Activated CD4-positive, alpha-beta memory T cell treated with anti-CD3 and anti-CD28 coated beads for 36 hours (primary cell): ENCODE measurements at regions of chr1 and their contacts with region 1.

Region 1: GRCh38 chr1:23344111-23344986 is at the start of gene HNRNPR:
- DNase-seq: peak; percentile 100
- H3K4me3 Mint-ChIP-seq: peak within 1 kb of the TSS; percentile 91
- H3K27ac Mint-ChIP-seq: peak within 1 kb of the TSS; percentile 96
- H3K4me1 Mint-ChIP-seq: peaks cover 41% of the 10 kb centered on the region
- H3K27me3 Mint-ChIP-seq: no peaks in the 10 kb centered on the region
- total RNA-seq, gene HNRNPR: 180 to 183 TPM

Region 2: GRCh38 chr1:22689505-22689904 is 654.8 kb before region 1 on chr1:
- CTCF ChIA-PET with region 1: no interaction called
- POLR2A ChIA-PET with region 1: no interaction called
- intact Hi-C with region 1: no loop called
- DNase-seq: no peak
- H3K4me3 Mint-ChIP-seq: no peak overlapping the region
- H3K27ac Mint-ChIP-seq: no peak overlapping the region
- H3K4me1 Mint-ChIP-seq: no peaks in the 10 kb centered on the region
- H3K27me3 Mint-ChIP-seq: peaks cover 19% of the 10 kb centered on the region

Region 3: DNA sequence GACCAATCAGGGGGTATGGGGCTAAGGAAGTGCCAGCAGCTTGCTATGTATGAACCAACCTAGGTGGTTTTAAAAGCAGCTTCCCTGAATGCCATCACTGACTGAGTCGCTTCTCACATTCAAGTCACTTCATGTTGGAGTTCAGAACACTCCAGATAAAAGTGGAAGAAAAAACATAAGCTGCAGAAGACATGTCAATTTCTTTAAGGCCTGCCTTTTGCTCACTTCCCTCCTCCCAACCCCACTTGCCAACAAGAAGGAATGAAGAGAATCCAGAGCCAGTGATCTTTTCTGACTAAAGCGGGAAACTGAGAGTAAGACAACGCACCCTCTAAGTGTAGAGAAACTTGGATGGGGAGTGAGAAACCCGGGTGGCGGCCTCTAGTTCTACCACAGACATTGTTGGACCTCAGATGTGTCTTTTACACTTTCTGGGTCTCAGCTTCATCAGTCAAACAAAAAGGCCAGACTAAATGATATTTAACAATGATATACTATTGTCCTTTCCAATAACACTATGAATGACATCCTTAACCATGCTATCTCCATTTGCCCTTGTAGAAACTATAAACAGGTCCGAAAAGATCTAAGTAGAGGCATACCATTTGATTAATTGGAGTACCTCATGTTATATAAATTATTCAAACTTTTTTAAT is 229.8 kb before region 1 on chr1:
- CTCF ChIA-PET with region 1: no interaction called
- POLR2A ChIA-PET with region 1: no interaction called
- intact Hi-C with region 1: loop called (anchors 5 kb)
- DNase-seq: no peak
- H3K4me3 Mint-ChIP-seq: no peak overlapping the region
- H3K27ac Mint-ChIP-seq: peak overlapping the region; percentile 23
- H3K4me1 Mint-ChIP-seq: peaks cover 77% of the 10 kb centered on the region
- H3K27me3 Mint-ChIP-seq: no peaks in the 10 kb centered on the region

Region 4: DNA sequence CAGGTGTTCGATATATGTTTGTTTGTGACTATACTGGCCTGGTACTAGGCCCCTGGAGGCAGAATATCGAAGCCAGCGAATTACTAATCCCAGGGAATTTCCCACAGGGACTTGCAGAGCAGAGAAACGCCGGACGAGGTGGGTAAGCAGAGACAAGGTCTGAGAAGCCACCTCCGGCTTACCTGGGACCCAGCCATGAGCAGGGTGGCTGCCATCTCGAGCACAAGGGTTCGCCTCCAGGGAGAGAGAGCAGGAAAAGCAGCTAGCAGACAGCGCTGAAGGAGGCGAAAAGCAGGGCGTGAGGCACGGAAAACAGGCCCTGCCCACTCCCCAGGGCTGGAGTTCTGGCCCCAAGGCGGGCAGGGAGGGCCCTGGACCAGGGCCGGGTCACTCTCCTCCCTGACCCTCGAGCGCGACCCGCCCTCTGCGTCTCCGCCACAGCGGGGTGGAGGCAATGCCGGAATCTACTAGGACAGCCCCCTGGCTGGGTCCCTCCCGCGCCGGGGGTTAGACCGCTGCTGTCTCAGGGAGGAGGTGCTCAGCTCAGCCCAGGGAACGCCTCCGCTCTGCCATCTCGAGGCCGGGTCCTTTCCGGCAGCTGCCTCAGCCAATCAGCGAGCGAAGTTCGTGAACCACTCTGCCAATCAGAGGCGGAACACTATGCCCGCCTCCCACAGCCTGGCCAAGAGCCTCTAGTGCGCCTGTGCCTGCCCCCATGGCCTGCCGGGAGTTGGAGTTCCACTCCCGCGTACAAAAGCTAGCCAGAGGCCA is 23.6 kb after region 1 on chr1:
- CTCF ChIA-PET with region 1: interaction called, 20 read pairs
- POLR2A ChIA-PET with region 1: interaction called, 65 read pairs
- intact Hi-C with region 1: loop called (anchors 1 kb)
- DNase-seq: peak; percentile 99
- H3K4me3 Mint-ChIP-seq: peak overlapping the region; percentile 93
- H3K27ac Mint-ChIP-seq: peak overlapping the region; percentile 98
- H3K4me1 Mint-ChIP-seq: peaks cover 30% of the 10 kb centered on the region
- H3K27me3 Mint-ChIP-seq: no peaks in the 10 kb centered on the region

Region 5: DNA sequence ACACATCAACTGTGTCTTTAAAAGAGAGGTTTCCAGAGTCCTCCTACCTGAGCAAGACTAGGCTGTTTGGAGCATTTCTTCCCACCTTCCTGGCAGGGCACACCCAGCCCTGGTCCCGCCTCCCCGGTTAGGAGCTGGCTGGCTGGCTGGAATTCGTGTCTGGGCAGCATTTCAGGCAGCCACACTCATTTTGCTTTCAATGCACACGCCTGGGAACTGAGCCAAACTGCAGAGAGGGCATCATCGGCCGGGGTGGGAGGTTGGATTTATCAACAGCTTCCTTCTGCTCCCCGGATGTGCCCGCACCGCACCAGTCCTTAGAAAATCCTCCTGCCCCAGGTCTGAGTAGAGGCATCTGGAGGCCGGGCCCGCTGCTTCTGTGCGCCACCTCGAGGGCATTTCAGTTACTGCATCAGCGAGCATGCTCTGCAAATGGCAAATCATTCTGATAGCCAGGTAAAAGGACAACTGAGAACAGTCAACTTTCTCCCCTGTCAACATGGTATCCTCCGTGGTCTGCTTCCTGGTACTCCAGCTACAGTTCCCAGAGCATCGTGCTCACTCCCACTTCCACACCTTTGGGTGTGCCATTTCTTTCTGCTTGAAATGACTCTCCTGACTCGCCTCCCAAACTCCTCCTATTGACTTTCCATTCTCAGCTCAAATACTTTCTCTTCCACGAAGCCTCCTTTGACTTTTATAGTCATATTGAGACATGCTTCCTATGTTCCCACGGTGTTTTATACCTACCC is 59.6 kb after region 1 on chr1:
- CTCF ChIA-PET with region 1: interaction called, 5 read pairs
- POLR2A ChIA-PET with region 1: no interaction called
- intact Hi-C with region 1: loop called (anchors 1 kb)
- DNase-seq: peak; percentile 93
- H3K4me3 Mint-ChIP-seq: no peak overlapping the region
- H3K27ac Mint-ChIP-seq: no peak overlapping the region
- H3K4me1 Mint-ChIP-seq: peaks cover 9% of the 10 kb centered on the region
- H3K27me3 Mint-ChIP-seq: no peaks in the 10 kb centered on the region

Region 6: DNA sequence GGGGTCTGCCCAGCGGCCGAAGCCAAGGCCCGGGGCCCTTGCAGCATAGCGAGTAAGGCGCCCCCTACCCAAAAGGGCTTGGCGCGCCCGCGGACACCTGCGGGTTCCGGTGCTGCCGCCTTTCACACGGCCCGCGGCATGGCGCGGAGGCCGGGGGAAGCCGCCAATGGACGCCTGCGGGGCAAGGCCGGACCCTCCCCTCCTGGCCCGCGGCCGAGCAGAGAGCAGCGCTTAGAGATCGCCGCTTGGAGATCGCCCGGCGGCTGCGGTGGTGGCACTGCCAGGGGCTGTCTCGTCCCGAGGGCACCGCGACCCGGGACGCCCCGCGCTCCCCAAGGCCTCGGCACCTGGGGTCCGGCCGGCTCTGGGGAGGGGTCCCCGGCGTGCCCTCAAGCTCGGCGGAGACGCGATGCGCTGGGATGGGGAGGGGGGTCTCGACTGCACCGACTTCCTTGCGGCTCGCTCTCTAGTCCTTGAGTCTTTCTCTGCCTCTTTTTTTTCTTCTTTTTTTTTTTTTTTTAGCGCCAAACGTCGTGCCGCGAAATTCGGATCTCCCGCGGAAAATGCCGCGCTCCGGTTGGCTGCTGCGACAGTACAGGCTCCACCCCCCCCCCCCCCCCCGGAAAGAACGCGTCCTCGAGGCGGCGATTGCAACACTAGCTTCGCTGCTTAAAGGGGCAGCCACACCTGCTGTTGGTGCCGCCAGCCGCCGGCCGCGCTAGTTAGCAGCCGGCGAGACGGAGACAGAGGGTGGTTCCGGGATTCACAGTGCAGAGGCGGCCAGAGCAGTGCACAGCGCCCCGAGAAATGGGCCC is 186.6 kb after region 1 on chr1 and contains the start of gene E2F2:
- CTCF ChIA-PET with region 1: no interaction called
- POLR2A ChIA-PET with region 1: no interaction called
- intact Hi-C with region 1: loop called (anchors 2 kb)
- DNase-seq: peak; percentile 89
- H3K4me3 Mint-ChIP-seq: peak within 1 kb of the TSS; percentile 88
- H3K27ac Mint-ChIP-seq: peak within 1 kb of the TSS; percentile 91
- H3K4me1 Mint-ChIP-seq: peaks cover 75% of the 10 kb centered on the region
- H3K27me3 Mint-ChIP-seq: no peaks in the 10 kb centered on the region
- total RNA-seq, gene E2F2: 22.1 to 26.3 TPM

Region 7: GRCh38 chr1:23619299-23620188 is 275.2 kb after region 1 on chr1:
- CTCF ChIA-PET with region 1: no interaction called
- POLR2A ChIA-PET with region 1: no interaction called
- intact Hi-C with region 1: loop called (anchors 10 kb)
- DNase-seq: peak; percentile 90
- H3K4me3 Mint-ChIP-seq: peak overlapping the region; percentile 67
- H3K27ac Mint-ChIP-seq: peak overlapping the region; percentile 76
- H3K4me1 Mint-ChIP-seq: peaks cover 76% of the 10 kb centered on the region
- H3K27me3 Mint-ChIP-seq: no peaks in the 10 kb centered on the region